Posterior vena cava (tissue), 2 donors: ENCODE measurements at regions of chr21 and their contacts with region 1.

Region 1: DNA sequence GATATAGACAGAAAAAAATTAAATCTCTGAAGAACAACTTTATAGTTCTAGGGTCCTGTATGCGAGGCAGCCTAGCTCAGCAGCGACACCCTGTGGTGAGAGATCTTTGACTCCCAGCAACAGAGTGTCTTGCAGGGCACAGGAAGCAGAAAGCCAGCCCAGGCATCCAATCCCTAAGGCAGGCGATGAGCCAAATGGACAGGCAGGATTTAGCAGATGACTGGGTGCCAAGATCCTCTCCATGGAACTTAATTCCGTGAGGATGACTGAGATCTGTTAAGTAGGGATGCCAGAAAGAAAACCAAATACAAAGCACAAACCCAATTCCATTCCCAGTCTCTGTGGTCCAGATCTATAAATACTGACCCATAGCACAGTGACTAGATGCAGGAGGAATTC is 38.8 kb downstream of the HLCS start:
- DNase-seq: peak; percentile 93

Region 2: DNA sequence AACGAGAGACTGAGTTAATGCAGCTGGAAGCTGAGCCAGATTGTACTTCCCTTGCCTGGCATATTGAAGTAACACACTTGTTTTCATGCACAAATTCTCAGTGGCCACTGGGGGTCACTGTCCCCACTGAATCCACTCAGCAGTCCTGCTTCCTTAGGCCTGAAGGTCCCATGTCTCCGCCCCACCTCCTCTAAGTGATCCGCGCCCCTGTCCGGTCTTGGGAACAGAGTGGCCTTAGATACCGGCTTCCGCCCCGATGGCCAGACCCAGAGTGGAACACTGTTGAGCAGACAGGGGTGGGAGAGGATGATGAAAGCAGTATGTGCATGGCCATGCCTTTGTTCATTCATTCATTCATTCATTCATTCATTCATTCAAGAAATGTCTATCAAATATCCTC is 507.7 kb before region 1 on chr21:
- intact Hi-C with region 1: loop called (anchors 10 kb)
- DNase-seq: peak; percentile 94

Region 3: GRCh38 chr21:36429947-36430546 is 497.7 kb before region 1 on chr21:
- intact Hi-C with region 1: loop called in 1 of 2 experiments (anchors 10 kb)
- DNase-seq: peak; percentile 95

Region 4: GRCh38 chr21:36504067-36505058 is 423.4 kb before region 1 on chr21:
- intact Hi-C with region 1: loop called (anchors 10 kb)
- DNase-seq: no peak

Region 5: DNA sequence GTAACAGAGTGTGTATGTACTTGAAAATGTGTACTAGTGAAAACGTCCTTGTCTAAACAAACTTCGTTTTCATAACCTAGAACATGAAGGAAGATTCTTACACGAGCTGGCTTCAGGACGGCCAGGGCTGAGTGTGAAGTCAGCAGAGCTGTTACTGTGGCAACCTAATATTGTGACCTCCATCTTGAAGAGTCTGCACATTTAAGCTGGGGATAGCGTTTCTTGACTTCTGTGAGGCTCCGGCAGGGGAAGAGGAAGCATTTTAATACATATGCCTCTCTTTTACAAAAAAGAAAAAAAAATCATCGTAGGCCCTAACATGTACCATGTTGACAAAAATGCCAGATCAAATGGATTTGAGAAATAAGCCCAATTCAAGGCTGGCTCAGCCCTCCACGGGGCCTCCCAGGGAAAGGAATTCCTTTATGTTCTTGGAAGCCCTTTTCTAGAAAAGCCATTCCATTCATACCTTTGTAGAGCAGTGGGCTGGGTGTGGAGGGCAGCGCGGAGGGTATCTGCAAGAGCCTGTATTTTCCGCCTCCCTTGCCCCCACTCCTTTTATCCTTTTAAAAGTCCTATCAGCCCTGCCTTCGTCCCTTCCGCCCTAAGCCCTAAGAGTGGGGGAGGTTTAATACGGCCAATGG is 177.7 kb before region 1 on chr21:
- intact Hi-C with region 1: loop called in 1 of 2 experiments (anchors 10 kb)
- DNase-seq: peak; percentile 48

Region 6: DNA sequence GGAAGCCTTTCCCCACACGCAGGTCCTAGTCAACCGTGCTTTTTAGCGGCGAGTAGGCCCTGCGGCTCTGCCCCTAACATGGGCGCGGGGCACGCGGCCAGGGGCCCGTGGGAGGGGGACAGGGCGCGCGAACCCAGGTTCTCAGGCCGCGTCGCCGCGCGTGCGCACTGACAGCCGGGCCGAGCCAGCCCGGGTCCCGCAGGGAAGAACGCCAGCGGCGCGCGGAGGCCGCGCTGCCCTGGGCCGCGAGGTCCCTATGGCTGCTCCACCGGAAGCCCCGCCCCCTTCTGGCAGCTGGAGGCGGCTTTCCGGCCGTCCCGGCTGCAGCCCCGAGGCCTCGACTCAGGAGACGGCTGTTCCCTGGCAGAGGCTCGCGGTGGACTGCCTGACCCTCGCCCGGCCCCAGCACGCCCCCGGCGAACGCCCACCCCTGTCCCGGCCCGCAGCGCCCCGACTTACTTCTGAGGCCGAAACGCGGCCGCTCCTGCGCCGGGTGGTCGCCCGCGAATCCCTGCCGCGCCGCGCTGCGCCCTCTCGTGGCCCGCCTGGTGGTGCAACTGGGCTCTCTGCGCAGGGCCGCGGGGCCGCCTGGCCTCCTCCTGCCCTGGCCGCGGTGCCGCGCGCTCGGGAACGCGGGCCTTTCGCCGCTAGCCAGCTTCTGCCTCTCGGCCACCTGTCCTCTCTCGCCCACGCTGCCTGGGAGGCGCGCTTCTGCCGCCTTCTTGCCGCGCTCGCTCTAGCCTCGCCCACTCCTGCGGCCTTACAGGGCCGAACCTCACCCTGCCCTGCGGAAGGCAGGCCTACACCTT is 62.2 kb after region 1 on chr21:
- intact Hi-C with region 1: loop called in 1 of 2 experiments (anchors 1 kb)
- DNase-seq: peak; percentile 98